Natural killer cell (primary cell): ENCODE measurements at regions of chr1 and their contacts with region 1.

Region 1: GRCh38 chr1:175033953-175034352 is 10.7 kb upstream of the MRPS14 start:
- DNase-seq: no peak
- ATAC-seq: no peak
- H3K4me3 ChIP-seq: no peak overlapping the region
- H3K4me3 Mint-ChIP-seq: no peak overlapping the region
- H3K27ac ChIP-seq: no peak overlapping the region
- H3K27ac Mint-ChIP-seq: no peak overlapping the region
- H3K4me1 ChIP-seq: peaks cover 8% of the 10 kb centered on the region
- H3K4me1 Mint-ChIP-seq: peaks cover 6 to 9% of the 10 kb centered on the region in 2 donors
- H3K27me3 ChIP-seq: no peaks in the 10 kb centered on the region
- H3K27me3 Mint-ChIP-seq: peaks cover 0 to 18% of the 10 kb centered on the region in 2 donors
- CTCF ChIP-seq: no peak

Region 2: GRCh38 chr1:175124861-175125260 is 90.9 kb after region 1 on chr1:
- intact Hi-C with region 1: loop called (anchors 1 kb)
- DNase-seq: no peak
- ATAC-seq: no peak
- H3K4me3 ChIP-seq: no peak overlapping the region
- H3K4me3 Mint-ChIP-seq: no peak overlapping the region
- H3K27ac ChIP-seq: no peak overlapping the region
- H3K27ac Mint-ChIP-seq: no peak overlapping the region
- H3K4me1 ChIP-seq: peaks cover 3% of the 10 kb centered on the region
- H3K4me1 Mint-ChIP-seq: peaks cover 0 to 5% of the 10 kb centered on the region in 2 donors
- H3K27me3 ChIP-seq: no peaks in the 10 kb centered on the region
- H3K27me3 Mint-ChIP-seq: peaks cover 0 to 10% of the 10 kb centered on the region in 2 donors
- CTCF ChIP-seq: no peak

Region 3: DNA sequence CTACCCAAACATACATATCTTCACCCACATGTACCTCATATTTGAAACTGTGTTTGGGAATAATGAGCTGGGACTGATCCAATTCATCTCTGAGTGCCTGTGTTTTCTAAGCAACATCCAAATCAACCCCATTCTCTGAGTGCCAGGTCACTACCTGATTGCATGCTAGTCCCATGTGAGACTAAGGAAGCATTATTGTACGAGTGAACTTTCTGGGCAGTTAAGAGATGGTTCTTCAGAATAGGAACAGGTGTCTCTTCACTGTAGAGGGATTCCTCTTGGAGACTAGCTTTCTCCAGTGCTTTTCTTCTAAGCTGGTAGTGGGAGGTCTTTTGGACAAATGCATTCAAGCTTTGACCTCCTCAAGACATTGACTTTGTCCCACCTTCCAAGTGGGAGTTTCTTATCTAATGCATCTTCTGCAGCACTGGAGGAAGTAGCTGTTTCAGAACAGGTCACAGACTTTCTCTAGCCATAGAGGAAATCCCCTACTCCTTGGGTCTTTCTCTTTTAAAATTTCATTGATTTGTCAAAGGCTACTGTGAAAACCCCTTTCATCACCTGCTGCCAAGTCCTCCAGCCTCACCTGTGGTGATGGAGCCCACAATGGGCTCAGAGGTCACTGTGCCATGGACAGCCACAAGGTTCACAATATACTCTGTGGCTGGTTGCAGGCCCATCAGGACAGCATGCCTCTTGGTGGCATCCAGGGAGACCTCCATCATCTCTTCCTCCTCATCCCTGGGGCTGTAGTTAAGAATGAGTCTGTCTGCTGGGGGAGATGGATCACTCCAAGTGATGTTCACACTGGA is 330.7 kb after region 1 on chr1:
- intact Hi-C with region 1: no loop called
- DNase-seq: no peak
- ATAC-seq: no peak
- H3K4me3 ChIP-seq: no peak overlapping the region
- H3K4me3 Mint-ChIP-seq: no peak overlapping the region
- H3K27ac ChIP-seq: no peak overlapping the region
- H3K27ac Mint-ChIP-seq: no peak overlapping the region
- H3K4me1 ChIP-seq: no peaks in the 10 kb centered on the region
- H3K4me1 Mint-ChIP-seq: no peaks in the 10 kb centered on the region
- H3K27me3 ChIP-seq: no peaks in the 10 kb centered on the region
- H3K27me3 Mint-ChIP-seq: peaks cover 6 to 18% of the 10 kb centered on the region in 2 donors
- CTCF ChIP-seq: no peak